Endothelial cell of umbilical vein (primary cell): ENCODE measurements at regions of chr1 and their contacts with region 1.

Region 1: GRCh38 chr1:32321712-32322291 is 14.2 kb downstream of the MARCKSL1 start:
- DNase-seq: no peak
- H3K4me3 ChIP-seq: no peak overlapping the region
- H3K27ac ChIP-seq: no peak overlapping the region
- H3K4me1 ChIP-seq: peaks cover 6% of the 10 kb centered on the region
- H3K27me3 ChIP-seq: no peaks in the 10 kb centered on the region
- CTCF ChIP-seq: no peak
- POLR2A ChIP-seq: no peak

Region 2: DNA sequence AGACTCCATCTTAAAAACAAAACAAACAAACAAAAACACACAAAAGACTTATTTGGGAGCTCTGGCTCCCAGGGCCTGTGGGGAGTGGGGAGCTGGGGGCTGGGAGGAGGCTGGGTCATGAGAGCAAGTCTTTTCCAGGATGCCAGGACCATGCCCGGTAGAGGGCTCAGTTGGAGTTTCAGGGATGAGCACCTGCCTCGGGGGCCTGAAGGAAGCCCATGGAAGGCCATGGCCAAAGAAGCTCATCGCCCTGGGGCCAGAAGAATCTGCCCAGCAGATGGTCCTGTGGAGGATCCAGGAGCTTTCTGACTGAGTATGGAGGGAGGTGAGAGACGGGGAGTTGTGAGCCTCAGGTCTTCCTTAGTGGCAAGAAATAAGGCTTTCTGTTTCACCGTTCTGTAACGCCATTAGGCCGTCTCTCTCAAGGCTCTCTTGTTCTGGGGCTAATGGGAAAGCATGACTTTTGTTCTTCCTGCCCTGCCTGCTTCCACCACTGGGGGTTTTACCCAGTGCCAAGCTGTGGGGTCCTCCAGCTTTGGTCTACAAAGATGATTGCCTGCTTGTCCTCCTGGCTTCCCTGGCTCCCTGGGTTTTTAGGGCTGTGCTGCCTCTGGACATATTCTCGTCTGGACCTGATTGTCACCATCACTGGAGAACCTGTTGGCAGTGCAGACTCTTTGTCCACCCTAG is 820.4 kb before region 1 on chr1:
- CTCF ChIA-PET with region 1: no interaction called
- POLR2A ChIA-PET with region 1: no interaction called
- dilution Hi-C with region 1: no loop called
- intact Hi-C with region 1: no loop called
- DNase-seq: no peak
- H3K4me3 ChIP-seq: no peak overlapping the region
- H3K27ac ChIP-seq: no peak overlapping the region
- H3K4me1 ChIP-seq: no peaks in the 10 kb centered on the region
- H3K27me3 ChIP-seq: peaks cover 0 to 7% of the 10 kb centered on the region in 2 experiments
- CTCF ChIP-seq: no peak
- POLR2A ChIP-seq: no peak

Region 3: DNA sequence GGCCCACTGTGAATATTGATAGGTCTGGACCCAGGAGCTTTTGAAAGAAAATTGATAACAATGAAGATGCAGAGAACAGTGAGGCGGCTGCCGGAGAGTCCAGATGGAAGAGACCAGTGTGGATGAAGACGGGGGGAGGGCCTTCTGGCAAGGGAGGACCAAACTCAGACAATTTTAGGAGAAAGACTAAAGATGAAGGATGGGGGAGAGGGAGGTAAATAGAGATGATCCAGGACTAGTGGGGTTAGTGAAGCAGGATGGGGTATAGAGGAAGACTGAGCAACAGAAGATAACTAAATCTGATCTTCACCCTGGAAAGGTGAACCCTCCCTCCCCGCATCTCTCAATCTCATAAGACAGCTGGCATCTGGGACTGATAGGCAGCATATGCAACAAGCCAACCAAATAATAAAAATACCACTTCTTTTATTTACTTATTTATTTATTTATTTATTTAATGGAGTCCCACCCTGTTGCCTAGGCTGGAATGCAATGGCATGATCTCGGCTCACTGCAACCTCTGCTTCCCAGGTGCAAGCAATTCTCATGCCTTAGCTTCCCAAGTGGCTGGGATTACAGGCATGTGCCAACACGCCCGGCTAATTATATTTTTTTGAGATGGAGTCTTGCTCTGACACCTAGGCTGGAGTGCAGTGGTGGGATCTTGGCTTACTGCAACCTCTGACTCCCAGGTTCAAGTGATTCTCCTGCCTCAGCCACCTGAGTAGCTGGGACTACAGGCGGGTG is 89.1 kb before region 1 on chr1:
- CTCF ChIA-PET with region 1: interaction called, 45 read pairs
- POLR2A ChIA-PET with region 1: no interaction called
- dilution Hi-C with region 1: no loop called
- intact Hi-C with region 1: no loop called
- DNase-seq: no peak
- H3K4me3 ChIP-seq: no peak overlapping the region
- H3K27ac ChIP-seq: no peak overlapping the region
- H3K4me1 ChIP-seq: peaks cover 8% of the 10 kb centered on the region
- H3K27me3 ChIP-seq: no peaks in the 10 kb centered on the region
- CTCF ChIP-seq: no peak
- POLR2A ChIP-seq: no peak

Region 4: GRCh38 chr1:32240140-32240951 is 81.5 kb before region 1 on chr1:
- CTCF ChIA-PET with region 1: interaction called, 50 read pairs
- POLR2A ChIA-PET with region 1: interaction called, 5 read pairs
- dilution Hi-C with region 1: no loop called
- intact Hi-C with region 1: no loop called
- DNase-seq: peak; percentile 35
- H3K4me3 ChIP-seq: peak overlapping the region; percentile 50 to 81 (median 76)
- H3K27ac ChIP-seq: peak overlapping the region; percentile 70
- H3K4me1 ChIP-seq: peaks cover 32% of the 10 kb centered on the region
- H3K27me3 ChIP-seq: no peaks in the 10 kb centered on the region
- CTCF ChIP-seq: peak in 1 of 2 donors; percentile 36
- POLR2A ChIP-seq: peak; percentile 58

Region 5: DNA sequence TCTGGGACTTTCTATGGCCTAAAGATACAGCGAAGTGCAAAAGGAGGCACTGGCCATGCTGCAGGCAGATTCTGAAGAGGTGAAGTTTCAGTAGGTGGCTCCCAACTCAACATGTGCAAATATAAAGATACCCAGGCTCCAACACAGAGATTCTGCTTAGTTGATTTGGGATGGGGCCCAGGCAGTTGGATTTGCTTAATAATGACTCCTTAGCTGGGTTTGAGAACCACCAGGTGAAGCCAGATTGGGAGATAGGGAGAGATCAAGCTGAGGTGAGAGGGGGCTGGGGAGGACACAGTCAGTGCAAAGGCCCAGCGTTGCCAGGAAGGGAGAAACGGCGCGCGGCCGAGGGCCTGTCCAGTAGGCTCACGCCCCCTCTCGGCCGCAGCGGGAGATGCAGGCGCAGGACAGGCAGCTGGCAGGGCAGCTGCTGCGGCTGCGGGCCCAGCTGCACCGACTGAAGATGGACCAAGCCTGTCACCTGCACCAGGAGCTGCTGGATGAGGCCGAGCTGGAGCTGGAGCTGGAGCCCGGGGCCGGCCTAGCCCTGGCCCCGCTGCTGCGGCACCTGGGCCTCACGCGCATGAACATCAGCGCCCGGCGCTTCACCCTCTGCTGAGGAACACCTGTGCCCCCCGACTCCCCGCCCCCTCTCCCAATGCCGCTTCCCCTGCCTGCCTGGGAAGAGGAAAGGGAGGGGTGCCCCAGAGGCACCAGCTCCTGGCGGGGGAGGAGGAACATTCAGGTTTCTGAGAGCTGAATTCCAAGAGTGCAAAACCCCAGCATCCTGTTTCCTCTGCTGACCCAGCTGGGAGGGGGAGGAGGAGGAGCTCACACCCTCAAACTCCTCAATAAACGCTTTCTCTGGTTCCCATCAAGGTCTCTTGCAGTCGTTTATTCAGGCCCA is 73.6 kb before region 1 on chr1:
- CTCF ChIA-PET with region 1: interaction called, 50 read pairs
- POLR2A ChIA-PET with region 1: no interaction called
- dilution Hi-C with region 1: no loop called
- intact Hi-C with region 1: no loop called
- DNase-seq: peak; percentile 74
- H3K4me3 ChIP-seq: peak overlapping the region in 1 of 3 experiments; percentile 29
- H3K27ac ChIP-seq: peak overlapping the region; percentile 60
- H3K4me1 ChIP-seq: peaks cover 47% of the 10 kb centered on the region
- H3K27me3 ChIP-seq: no peaks in the 10 kb centered on the region
- CTCF ChIP-seq: peak; percentile 96 to 98
- POLR2A ChIP-seq: no peak